Naive thymus-derived CD4-positive, alpha-beta T cell (primary cell): ENCODE measurements at regions of chr18 and their contacts with region 1.

Region 1: DNA sequence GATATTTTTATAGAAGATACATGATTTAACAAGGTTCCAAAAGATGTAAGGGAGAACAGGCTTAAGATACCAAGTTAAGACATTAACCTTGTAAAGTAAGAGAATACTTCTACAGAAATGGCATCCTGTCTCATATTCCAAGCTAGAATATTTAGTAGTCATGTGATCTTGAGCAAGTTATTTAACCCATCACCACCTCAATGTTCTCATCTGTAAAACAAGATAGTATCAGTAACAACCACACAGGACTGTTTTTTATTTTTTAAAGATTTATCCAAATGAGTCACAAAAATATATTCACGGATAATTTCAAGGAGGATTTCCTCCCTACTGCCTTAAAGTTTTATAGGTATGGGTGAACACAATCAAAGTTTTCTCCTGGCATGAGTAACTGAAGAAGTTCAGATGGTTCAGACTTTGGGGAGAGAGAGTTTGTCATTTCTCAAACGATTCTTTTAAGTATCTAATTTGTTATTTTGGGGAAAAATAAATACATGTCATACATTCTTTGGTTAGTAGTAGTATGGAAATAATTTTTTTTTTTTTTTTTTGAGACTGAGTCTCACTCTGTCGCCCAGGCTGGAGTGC is 25.9 kb downstream of the ROCK1 start:
- DNase-seq: no peak
- ATAC-seq: no peak
- H3K4me3 ChIP-seq: no peak overlapping the region
- H3K4me3 Mint-ChIP-seq: peak overlapping the region in 6 of 10 donors; percentile 15 to 63 (median 46)
- H3K27ac ChIP-seq: no peak overlapping the region
- H3K27ac Mint-ChIP-seq: peak overlapping the region in 1 of 9 donors; percentile 41
- H3K4me1 ChIP-seq: peaks cover 5 to 19% of the 10 kb centered on the region in 2 donors
- H3K4me1 Mint-ChIP-seq: peaks cover 41 to 88% (median 78%) of the 10 kb centered on the region in 7 donors
- H3K27me3 ChIP-seq: no peaks in the 10 kb centered on the region
- H3K27me3 Mint-ChIP-seq: no peaks in the 10 kb centered on the region

Region 2: GRCh38 chr18:21069468-21069867 is 16.2 kb before region 1 on chr18:
- CTCF ChIA-PET with region 1: no interaction called
- POLR2A ChIA-PET with region 1: no interaction called
- intact Hi-C with region 1: loop called in 1 of 2 experiments (anchors 1 kb)
- DNase-seq: no peak
- ATAC-seq: no peak
- H3K4me3 ChIP-seq: no peak overlapping the region
- H3K4me3 Mint-ChIP-seq: no peak overlapping the region
- H3K27ac ChIP-seq: no peak overlapping the region
- H3K27ac Mint-ChIP-seq: peak overlapping the region in 1 of 9 donors; percentile 22
- H3K4me1 ChIP-seq: peaks cover 9 to 16% of the 10 kb centered on the region in 2 donors
- H3K4me1 Mint-ChIP-seq: peaks cover 11 to 69% (median 56%) of the 10 kb centered on the region in 7 donors
- H3K27me3 ChIP-seq: no peaks in the 10 kb centered on the region
- H3K27me3 Mint-ChIP-seq: no peaks in the 10 kb centered on the region

Region 3: DNA sequence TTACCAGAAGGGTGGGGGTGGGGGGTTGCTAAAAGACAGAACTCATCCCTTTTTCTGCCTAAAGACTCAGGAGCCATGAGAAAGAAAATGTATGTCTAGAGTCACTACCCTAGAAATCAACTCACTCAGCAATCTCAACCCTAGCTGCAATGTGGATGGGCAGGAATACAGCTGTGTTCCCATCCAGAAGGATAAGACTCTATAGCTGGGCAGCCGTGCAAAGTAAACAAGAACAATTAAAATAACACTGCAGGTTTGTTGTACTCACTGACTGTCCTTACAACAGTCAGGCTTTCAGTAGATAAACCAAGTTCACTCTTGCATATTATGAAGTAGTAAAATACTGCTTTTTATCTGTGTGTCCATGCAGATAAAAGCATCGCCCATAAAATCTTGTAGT is 440.8 kb after region 1 on chr18:
- CTCF ChIA-PET with region 1: no interaction called
- POLR2A ChIA-PET with region 1: no interaction called
- intact Hi-C with region 1: no loop called
- DNase-seq: no peak
- ATAC-seq: no peak
- H3K4me3 ChIP-seq: no peak overlapping the region
- H3K4me3 Mint-ChIP-seq: no peak overlapping the region
- H3K27ac ChIP-seq: no peak overlapping the region
- H3K27ac Mint-ChIP-seq: peak overlapping the region in 3 of 9 donors; percentile 0 to 73 (median 14)
- H3K4me1 ChIP-seq: no peaks in the 10 kb centered on the region
- H3K4me1 Mint-ChIP-seq: peaks cover 0 to 2% (median 0%) of the 10 kb centered on the region in 7 donors
- H3K27me3 ChIP-seq: no peaks in the 10 kb centered on the region
- H3K27me3 Mint-ChIP-seq: no peaks in the 10 kb centered on the region